ENCODE measurements at regions of chr1 and their contacts with region 1.

Region 1: GRCh38 chr1:161864577-161864976 is 98.5 kb downstream of the ATF6 start:
- DNase-seq: peak; percentile 32
- ATAC-seq: peak; percentile 79
- H3K4me3 ChIP-seq: no peak overlapping the region
- H3K27ac ChIP-seq: no peak overlapping the region
- H3K4me1 ChIP-seq: no peaks in the 10 kb centered on the region
- H3K27me3 ChIP-seq: no peaks in the 10 kb centered on the region
- CTCF ChIP-seq: peak; percentile 63

Region 2: DNA sequence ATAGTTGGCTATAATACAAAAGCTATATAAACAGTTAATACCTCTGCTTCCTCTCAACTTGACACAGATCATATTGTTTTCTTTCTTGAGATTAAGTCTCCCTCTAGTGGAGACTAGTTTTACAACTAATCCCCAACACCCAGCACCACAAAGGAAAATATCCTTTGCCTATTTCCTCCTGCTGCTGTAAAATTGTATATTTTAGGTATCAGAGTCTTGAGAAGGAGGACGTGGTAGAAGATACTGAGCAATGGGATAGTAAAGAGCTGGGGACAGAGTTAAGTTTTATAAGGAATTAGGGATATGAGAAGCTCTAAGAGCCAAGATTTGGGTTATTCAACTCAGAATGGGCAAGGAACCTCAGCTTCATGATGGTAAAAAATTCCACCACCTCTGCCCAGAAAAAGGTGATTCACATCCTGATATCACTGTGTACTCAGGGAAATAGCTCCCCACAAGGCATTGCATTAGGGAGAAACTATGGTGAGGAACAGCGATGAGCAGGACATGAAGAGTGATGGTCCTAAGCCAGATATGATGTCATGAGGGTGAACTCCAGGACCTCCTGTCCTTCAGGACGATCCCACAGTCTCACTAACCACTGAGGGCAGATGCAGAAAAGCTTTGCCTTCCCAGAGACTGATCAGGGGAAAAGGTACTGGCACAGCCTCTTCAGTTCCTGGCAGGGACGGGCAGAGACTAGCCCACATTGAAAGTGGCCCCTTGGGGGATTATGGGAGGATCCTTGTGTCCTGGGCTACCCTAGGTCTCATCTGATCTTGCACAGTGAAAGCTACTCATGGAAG is 482.2 kb before region 1 on chr1:
- CTCF ChIA-PET with region 1: no interaction called
- POLR2A ChIA-PET with region 1: no interaction called
- intact Hi-C with region 1: no loop called
- DNase-seq: peak; percentile 91
- ATAC-seq: peak; percentile 92
- H3K4me3 ChIP-seq: peak overlapping the region; percentile 44; the same call in 1 of the 2 replicates
- H3K27ac ChIP-seq: peak overlapping the region; percentile 87
- H3K4me1 ChIP-seq: peaks cover 22% of the 10 kb centered on the region
- H3K27me3 ChIP-seq: no peaks in the 10 kb centered on the region
- CTCF ChIP-seq: peak; percentile 84

Region 3: DNA sequence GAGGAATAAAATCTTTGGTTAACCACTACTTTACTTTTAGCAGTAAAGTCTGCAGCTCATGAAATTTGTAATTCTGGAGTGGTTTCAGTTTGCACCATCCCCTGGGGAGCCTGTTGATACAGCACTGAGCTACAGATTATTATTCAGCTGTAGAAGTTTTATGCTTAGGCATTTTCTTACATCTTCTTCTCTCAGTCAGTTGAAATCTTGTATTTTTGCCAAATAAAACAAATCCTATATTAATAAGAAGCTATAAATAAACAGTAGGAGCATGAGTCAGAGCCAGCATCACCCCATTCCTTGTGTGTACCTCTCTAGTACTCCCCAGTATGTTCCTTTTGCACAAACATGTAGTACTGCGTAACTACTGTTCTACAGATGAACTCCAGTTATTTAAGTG is 20.4 kb after region 1 on chr1:
- CTCF ChIA-PET with region 1: no interaction called
- POLR2A ChIA-PET with region 1: no interaction called
- intact Hi-C with region 1: loop called (anchors 2 kb)
- DNase-seq: peak; percentile 75
- ATAC-seq: peak; percentile 85
- H3K4me3 ChIP-seq: peak overlapping the region; percentile 42
- H3K27ac ChIP-seq: peak overlapping the region; percentile 21
- H3K4me1 ChIP-seq: peaks cover 23% of the 10 kb centered on the region
- H3K27me3 ChIP-seq: no peaks in the 10 kb centered on the region
- CTCF ChIP-seq: no peak

Region 4: DNA sequence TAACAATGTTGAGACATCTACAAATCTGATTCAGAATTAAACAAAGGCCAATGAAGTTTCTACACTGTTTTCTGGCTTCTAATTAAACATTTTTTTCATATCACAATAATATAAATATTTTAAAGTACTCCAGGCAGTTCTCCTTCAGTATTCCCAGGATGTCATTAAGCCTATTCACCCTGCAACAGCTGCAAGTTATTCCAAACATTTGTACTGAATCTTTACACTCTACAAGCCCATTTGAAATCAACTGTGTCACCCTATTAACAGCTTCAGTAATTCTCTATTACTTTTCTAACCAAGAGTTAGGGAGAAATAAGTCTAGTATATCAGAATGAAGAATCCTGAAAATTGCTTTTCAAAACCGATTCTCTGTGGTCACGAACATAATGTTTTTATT is 34.5 kb after region 1 on chr1:
- CTCF ChIA-PET with region 1: no interaction called
- POLR2A ChIA-PET with region 1: no interaction called
- intact Hi-C with region 1: loop called (anchors 2 kb)
- DNase-seq: no peak
- ATAC-seq: no peak
- H3K4me3 ChIP-seq: no peak overlapping the region
- H3K27ac ChIP-seq: no peak overlapping the region
- H3K4me1 ChIP-seq: peaks cover 8% of the 10 kb centered on the region
- H3K27me3 ChIP-seq: no peaks in the 10 kb centered on the region
- CTCF ChIP-seq: no peak

Measured in PC-3 (cell line).